WTC11 (cell line): ENCODE measurements at regions of chr4 and their contacts with region 1.

Region 1: DNA sequence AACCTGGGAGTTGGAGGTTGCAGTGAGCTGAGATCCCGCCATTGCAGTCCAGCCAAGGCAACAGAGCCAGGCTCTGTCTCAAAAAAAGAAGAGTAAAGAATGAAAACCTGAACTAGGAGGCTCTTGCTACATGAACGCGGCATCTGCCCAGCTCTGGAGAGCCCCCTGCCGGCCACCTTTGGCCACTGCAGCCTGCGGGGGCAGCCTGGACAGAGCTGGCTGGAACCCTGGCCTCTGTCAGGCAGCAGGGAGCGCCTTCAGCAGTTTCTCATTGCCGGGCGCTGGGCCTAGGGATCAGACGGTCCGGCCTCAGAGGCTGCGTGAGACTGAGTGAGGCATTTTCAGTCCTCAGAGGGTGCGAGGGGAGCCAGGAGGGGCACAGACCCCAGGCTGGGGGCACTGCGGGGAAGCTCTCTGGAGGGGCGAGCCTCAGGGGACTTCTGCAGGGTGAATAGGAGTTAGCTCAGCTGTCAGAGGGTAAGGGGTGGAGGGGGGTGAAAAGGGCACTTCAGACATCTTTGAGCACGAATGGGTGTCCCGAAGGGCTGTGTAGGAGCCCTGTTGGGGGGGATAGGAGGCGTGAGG is 17.5 kb downstream of the DOK7 start:
- DNase-seq: peak; percentile 95
- ATAC-seq: peak; percentile 85
- H3K4me3 Mint-ChIP-seq: peak overlapping the region; percentile 53
- H3K27ac Mint-ChIP-seq: no peak overlapping the region
- H3K4me1 Mint-ChIP-seq: peaks cover 18% of the 10 kb centered on the region
- H3K27me3 Mint-ChIP-seq: peaks cover 68% of the 10 kb centered on the region
- CTCF ChIP-seq: peak; percentile 99

Region 2: GRCh38 chr4:3346146-3346545 is 134.5 kb before region 1 on chr4:
- CTCF ChIA-PET with region 1: interaction called, 30 read pairs
- POLR2A ChIA-PET with region 1: no interaction called
- DNase-seq: no peak
- ATAC-seq: peak; percentile 75
- H3K4me3 Mint-ChIP-seq: no peak overlapping the region
- H3K27ac Mint-ChIP-seq: peak overlapping the region; percentile 72; the same call in 1 of the 2 replicates
- H3K4me1 Mint-ChIP-seq: peaks cover 32% of the 10 kb centered on the region
- H3K27me3 Mint-ChIP-seq: no peaks in the 10 kb centered on the region
- CTCF ChIP-seq: peak; percentile 73

Region 3: GRCh38 chr4:3436798-3437581 is 43.6 kb before region 1 on chr4:
- CTCF ChIA-PET with region 1: interaction called, 37 read pairs
- POLR2A ChIA-PET with region 1: no interaction called
- DNase-seq: no peak
- ATAC-seq: no peak
- H3K4me3 Mint-ChIP-seq: no peak overlapping the region
- H3K27ac Mint-ChIP-seq: no peak overlapping the region
- H3K4me1 Mint-ChIP-seq: no peaks in the 10 kb centered on the region
- H3K27me3 Mint-ChIP-seq: no peaks in the 10 kb centered on the region
- CTCF ChIP-seq: no peak

Region 4: GRCh38 chr4:3452376-3452775 is 28.2 kb before region 1 on chr4:
- CTCF ChIA-PET with region 1: interaction called, 12 read pairs
- POLR2A ChIA-PET with region 1: no interaction called
- DNase-seq: peak; percentile 48
- ATAC-seq: peak; percentile 65
- H3K4me3 Mint-ChIP-seq: no peak overlapping the region
- H3K27ac Mint-ChIP-seq: no peak overlapping the region
- H3K4me1 Mint-ChIP-seq: no peaks in the 10 kb centered on the region
- H3K27me3 Mint-ChIP-seq: peaks cover 51% of the 10 kb centered on the region
- CTCF ChIP-seq: no peak

Region 5: GRCh38 chr4:3470244-3471097 is 10.1 kb before region 1 on chr4:
- CTCF ChIA-PET with region 1: interaction called, 48 read pairs
- POLR2A ChIA-PET with region 1: no interaction called
- DNase-seq: no peak
- ATAC-seq: no peak
- H3K4me3 Mint-ChIP-seq: no peak overlapping the region
- H3K27ac Mint-ChIP-seq: no peak overlapping the region
- H3K4me1 Mint-ChIP-seq: peaks cover 5% of the 10 kb centered on the region; the same call in 1 of the 2 replicates
- H3K27me3 Mint-ChIP-seq: peaks cover 39% of the 10 kb centered on the region
- CTCF ChIP-seq: no peak

Region 6: DNA sequence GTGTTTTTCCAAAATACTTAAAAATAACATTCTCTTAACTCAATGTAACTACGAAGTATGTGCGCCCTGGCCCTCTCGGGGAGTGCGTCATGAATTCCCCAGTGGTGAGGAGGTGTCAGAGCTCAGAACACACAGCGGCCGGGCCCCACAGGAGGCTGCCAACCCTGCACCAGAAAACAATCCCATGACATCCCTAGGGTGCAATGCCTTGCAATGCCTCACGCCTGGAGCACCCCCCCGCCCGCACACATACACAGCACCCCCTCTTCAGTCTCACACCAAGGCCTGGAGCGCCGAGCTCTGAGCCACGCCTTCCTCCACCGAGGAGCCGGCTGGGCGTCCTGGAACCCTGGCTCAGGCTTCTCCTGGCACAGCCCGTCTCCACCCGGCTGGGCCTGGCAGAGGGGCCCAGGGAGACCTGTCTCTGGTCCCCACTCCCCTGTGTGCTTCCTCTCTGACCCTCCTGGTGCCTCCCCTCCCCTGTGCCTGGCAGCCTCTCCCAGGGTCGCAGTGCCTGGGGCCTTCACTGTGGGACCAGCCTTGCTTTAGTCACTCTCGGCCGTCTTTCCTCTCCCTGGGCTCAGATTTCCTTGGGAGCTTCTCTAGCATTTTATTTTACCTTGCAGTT is 177.4 kb after region 1 on chr4:
- CTCF ChIA-PET with region 1: no interaction called
- POLR2A ChIA-PET with region 1: no interaction called
- DNase-seq: no peak
- ATAC-seq: no peak
- H3K4me3 Mint-ChIP-seq: no peak overlapping the region
- H3K27ac Mint-ChIP-seq: no peak overlapping the region
- H3K4me1 Mint-ChIP-seq: peaks cover 17% of the 10 kb centered on the region
- H3K27me3 Mint-ChIP-seq: no peaks in the 10 kb centered on the region
- CTCF ChIP-seq: no peak

Region 7: DNA sequence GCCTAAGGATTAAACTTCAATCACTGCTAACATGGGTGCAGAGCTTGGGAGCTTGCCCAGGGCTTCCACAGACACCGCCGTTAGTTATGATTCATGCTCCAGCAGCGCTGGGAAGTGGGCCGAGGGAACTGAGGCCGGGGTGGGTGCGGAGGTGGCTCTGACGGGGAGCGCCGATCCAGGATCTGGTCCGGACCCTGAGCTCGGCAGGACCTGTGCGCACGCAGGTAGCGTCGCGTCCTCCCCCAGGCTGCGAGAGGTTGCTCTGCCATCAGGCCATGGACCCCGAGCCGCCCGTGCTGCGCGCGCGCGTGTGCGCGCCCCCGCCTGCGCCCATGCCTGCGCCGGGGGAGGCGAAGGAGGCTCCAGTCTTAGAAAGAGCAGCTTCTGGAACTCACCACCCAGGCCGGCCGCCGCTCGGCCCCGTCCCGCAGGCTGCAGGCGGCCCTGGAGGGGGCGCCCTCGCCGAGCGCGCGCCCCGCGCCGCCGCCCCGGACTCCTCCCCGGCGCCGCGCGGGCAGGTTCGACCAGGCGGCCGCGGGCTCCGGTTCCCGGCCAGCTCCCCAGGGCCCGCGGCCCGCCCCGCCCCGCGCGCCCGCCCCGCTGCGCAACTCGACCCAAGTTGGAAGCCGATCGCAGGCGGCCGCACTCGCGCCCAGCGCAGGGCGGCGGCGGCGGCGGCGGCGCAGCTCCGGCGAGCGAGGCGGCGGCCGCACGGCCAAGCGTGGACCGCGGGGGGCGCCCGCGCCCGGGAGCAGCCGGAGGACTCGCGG is 284.8 kb after region 1 on chr4:
- CTCF ChIA-PET with region 1: interaction called, 11 read pairs
- POLR2A ChIA-PET with region 1: no interaction called
- DNase-seq: peak; percentile 70
- ATAC-seq: peak; percentile 71
- H3K4me3 Mint-ChIP-seq: peak overlapping the region; percentile 47
- H3K27ac Mint-ChIP-seq: no peak overlapping the region
- H3K4me1 Mint-ChIP-seq: peaks cover 8% of the 10 kb centered on the region
- H3K27me3 Mint-ChIP-seq: peaks cover 37% of the 10 kb centered on the region
- CTCF ChIP-seq: no peak